GM10248 (cell line): ENCODE measurements at regions of chr2 and their contacts with region 1.

Region 1: DNA sequence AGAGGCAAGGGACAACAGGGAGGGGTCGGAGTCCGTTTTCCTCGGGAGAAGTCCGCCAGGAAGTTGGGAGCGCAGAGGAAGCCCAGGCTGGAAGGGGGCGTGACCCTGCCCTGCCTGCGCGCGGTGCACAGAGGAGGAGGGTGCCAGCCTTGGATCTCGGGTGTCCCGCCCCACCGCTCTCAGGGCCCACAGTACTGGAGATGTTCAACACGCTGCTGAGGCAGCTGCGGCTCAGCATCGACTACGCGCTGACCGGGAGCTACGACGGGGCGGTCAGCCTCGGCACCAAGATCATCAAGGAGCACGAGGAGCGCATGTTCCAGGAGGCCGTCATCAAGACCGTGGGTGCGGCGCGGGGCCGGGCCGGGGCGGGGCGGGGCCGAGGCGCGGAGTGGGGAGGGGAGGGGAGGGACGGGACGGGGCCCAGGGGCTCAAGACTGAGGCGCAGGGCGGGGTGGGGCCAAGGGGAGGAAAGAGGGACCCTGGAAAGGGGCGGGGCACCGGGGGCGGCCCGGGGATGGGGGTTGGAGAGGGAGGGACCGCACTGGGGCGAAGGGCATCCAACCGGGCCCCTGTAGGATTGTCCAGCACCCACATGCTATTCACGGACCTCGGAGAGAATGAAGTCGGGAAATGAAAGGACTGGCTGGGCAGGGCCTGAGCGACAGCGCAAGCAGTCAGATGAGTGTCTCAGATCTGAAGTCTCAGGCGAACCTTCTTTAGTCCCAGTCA is 36.6 kb downstream of the POMC start:
- DNase-seq: no peak
- CTCF ChIP-seq: no peak

Region 2: GRCh38 chr2:24977631-24978030 is 154.1 kb before region 1 on chr2:
- CTCF ChIA-PET with region 1: interaction called, 129 read pairs
- POLR2A ChIA-PET with region 1: no interaction called
- DNase-seq: no peak
- CTCF ChIP-seq: no peak

Region 3: DNA sequence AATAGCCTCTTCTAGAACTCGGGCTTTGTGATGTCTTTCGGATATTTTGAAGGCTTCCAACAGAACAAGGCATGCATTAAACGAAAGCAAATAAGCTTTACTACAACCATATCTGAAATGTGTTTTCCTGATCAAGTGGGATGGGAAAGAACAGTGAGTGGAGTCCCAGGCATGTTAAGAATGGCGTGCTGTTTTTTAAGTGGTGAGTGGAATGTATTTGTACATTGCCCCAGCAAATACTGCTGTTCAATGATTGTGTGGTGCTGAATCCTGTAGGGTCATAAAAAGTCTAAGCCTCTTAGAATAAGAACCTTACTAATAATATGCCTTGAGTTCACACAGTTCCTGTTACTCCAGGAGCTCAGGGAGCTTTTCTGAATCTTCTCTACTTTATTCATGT is 15.8 kb before region 1 on chr2:
- CTCF ChIA-PET with region 1: interaction called, 16 read pairs
- POLR2A ChIA-PET with region 1: no interaction called
- DNase-seq: no peak
- CTCF ChIP-seq: no peak